ENCODE measurements at regions of chr1 and their contacts with region 1.

Region 1: DNA sequence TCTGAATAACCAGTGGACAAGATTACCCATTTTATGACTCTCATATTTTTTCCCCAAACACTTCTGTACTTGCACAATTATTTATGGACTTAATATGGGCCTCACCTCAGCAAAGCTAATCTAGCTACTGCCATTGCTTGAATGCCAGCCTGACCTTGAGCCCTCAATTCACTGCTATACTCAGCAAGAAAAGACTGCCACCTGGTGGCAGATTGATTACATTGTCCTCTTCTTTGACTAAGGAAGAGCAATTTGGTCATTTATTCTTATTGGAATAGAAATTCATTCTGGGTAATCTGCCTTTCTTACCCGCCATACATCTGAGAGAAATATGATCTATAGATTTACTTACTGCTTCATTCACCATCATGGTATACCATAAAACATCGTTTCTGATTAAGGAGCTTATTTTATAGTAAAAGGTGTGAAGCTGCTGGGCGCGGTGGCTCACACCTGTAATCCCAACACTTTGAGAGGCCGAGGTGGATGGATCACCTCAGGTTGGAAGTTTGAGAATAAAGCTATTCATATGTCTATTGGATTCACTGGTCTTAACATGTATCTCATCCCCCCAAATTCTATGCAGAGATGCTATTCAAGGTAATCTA is 32.9 kb upstream of the DIPK1A start:
- DNase-seq: no peak
- H3K4me3 ChIP-seq: no peak overlapping the region
- H3K27me3 ChIP-seq: peaks cover 5% of the 10 kb centered on the region
- CTCF ChIP-seq: peak; percentile 66

Region 2: DNA sequence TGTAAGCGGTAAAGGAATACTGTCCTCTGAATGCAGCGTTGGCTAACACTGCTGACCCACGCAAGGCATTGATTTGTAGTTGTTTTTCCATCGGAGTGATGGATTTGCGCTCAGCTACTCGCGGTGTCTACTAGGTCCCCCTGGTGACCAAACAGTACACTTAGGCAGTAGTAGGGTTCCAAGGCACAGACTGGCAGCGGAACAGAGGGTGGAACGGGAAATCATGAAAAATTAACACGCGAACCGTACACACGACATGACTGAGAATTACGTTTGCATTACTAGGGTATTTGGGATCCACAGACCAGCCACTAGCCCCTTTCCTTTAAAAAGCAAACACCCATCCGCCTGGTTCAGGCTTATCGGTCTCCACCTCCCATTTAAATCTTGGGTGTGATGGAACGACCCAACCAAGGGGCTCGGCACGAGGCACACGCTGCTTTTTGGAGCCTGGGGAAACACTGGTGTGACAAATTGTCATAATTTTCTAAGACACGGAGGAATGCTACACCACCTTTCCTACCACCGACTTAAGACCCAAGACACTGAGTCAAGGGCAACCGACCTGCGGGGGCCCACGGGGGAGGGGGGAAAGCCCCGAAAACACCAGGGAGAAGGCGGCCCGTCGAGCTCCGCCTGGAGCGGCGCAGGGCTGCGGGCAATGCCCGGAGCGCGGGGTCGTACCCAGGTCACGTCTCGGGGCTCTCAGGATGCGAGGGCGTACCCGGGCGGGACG is 33.6 kb before region 1 on chr1:
- CTCF ChIA-PET with region 1: interaction called, 72 read pairs
- POLR2A ChIA-PET with region 1: no interaction called
- DNase-seq: peak; percentile 38
- H3K4me3 ChIP-seq: peak overlapping the region; percentile 84
- H3K27me3 ChIP-seq: no peaks in the 10 kb centered on the region
- CTCF ChIP-seq: peak; percentile 78

Region 3: GRCh38 chr1:92975551-92976232 is 18.5 kb before region 1 on chr1:
- CTCF ChIA-PET with region 1: interaction called, 15 read pairs
- POLR2A ChIA-PET with region 1: no interaction called
- DNase-seq: no peak
- H3K4me3 ChIP-seq: no peak overlapping the region
- H3K27me3 ChIP-seq: peaks cover 3% of the 10 kb centered on the region
- CTCF ChIP-seq: no peak

Region 4: DNA sequence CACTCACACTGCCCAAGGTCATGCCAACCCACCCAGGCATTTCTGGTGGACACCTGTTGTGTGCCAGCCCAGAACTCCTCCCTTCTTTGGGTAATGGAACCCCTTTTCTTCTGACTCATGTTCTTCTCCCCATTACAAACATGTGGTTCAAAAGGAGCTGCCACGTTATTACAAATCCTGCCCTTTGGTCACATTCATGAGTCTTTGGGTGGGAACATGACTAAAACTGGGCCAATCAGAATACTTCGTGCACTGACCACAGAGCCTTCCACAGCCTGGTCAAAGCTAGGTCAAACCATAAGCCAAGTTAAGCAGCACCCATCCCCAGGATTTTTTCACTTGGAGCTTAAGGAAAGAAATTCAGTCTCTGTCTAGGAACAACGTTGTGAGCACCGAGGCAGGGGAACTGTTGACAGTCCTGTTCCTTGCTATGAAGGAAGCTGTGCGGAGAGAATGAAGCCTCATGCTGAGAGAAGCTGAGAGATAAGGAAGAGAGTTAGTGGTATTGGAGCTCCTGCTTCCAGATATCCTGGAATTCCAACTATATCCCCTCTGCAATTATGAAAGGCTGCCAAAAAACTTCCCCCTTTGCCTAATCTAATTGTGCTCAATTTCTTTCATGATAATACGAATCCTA is 13.8 kb after region 1 on chr1:
- CTCF ChIA-PET with region 1: interaction called, 19 read pairs
- POLR2A ChIA-PET with region 1: no interaction called
- DNase-seq: no peak
- H3K4me3 ChIP-seq: no peak overlapping the region
- H3K27me3 ChIP-seq: peaks cover 7% of the 10 kb centered on the region
- CTCF ChIP-seq: no peak